Caco-2 (cell line): ENCODE measurements at regions of chr6 and their contacts with region 1.

Region 1: DNA sequence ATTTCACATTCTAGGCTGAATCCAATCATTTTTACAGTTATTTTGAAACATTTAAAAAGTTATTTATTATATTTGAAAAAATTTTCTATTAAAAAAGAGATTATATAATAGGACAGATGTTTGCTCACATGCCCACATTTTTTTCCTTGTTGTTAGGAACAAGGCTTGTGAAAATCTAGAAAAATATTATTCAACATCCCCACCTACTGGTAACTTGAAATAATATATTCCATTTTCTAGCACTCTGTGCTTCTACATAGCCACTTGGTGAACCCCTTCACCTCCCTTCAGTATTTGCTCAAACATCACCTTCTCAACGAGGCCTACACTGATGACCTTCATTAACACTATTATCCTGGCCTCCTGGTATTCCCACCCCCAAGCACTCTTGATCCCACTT is 18.3 kb upstream of the GPRC6A start:
- DNase-seq: peak in 1 of 2 experiments; percentile 16
- H3K4me3 ChIP-seq: no peak overlapping the region
- H3K4me3 Mint-ChIP-seq: no peak overlapping the region
- H3K27ac Mint-ChIP-seq: no peak overlapping the region
- H3K4me1 ChIP-seq: peaks cover 5% of the 10 kb centered on the region; the same call in 1 of the 2 replicates
- H3K4me1 Mint-ChIP-seq: no peaks in the 10 kb centered on the region
- H3K27me3 ChIP-seq: no peaks in the 10 kb centered on the region
- H3K27me3 Mint-ChIP-seq: no peaks in the 10 kb centered on the region
- CTCF ChIP-seq: peak in 1 of 2 experiments; percentile 45

Region 2: GRCh38 chr6:116779573-116780164 is 67.6 kb before region 1 on chr6:
- CTCF ChIA-PET with region 1: interaction called, 3 read pairs
- POLR2A ChIA-PET with region 1: no interaction called
- intact Hi-C with region 1: loop called (anchors 1 kb)
- DNase-seq: peak in 1 of 2 experiments; percentile 48
- H3K4me3 ChIP-seq: no peak overlapping the region
- H3K4me3 Mint-ChIP-seq: no peak overlapping the region
- H3K27ac Mint-ChIP-seq: no peak overlapping the region
- H3K4me1 ChIP-seq: no peaks in the 10 kb centered on the region
- H3K4me1 Mint-ChIP-seq: peaks cover 12% of the 10 kb centered on the region
- H3K27me3 ChIP-seq: no peaks in the 10 kb centered on the region
- H3K27me3 Mint-ChIP-seq: no peaks in the 10 kb centered on the region
- CTCF ChIP-seq: peak; percentile 23 to 65

Region 3: DNA sequence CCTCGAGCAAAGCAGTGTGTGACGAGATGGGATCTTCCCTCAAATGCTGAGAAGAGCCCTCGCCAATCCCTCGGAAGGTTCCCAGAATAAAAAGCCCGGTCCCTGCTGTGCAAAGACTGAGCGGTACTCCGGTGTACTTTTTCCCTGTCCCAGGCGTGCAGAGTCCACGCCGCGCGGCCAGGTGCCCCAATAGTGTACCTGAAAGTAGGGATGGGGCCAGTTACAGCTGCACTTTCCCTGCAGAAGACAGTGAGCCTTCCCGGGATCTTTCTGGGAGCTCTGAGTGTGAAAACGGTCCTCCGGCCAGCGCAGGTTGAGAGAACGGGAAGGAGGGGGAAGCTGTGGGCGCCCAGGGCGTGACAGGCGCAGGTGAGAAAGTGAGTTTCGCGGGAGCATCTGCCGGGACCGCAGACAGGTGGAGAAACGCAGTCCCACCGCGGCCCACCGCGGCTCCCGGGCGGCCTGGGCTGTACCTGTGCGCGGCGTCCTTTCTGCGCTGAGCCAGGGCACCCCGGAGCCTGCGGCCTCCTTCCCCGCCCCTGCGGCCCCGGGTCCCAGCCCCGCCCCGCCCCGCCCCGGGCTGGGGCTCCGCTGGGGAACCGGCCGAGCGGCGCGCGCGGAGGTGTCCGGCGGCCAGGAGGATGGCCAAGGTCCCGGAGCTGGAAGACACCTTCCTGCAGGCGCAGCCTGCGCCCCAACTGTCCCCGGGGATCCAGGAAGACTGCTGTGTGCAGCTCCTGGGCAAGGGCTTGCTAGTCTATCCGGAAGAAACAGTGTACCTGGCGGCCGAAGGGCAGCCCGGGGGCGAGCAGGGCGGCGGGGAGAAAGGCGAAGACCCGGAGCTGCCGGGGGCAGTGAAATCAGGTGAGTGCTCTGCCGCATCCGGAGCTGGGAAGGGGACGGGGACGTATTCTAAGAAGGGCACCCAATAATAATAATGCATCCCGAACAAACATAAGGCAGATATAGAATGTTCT is 29.7 kb after region 1 on chr6 and contains the start of gene RFX6:
- CTCF ChIA-PET with region 1: no interaction called
- POLR2A ChIA-PET with region 1: no interaction called
- intact Hi-C with region 1: no loop called
- DNase-seq: peak; percentile 38 to 51
- H3K4me3 ChIP-seq: peak within 1 kb of the TSS; percentile 53
- H3K4me3 Mint-ChIP-seq: peak within 1 kb of the TSS; percentile 88
- H3K27ac Mint-ChIP-seq: no peak within 1 kb of the TSS
- H3K4me1 ChIP-seq: peaks cover 4% of the 10 kb centered on the region; the same call in 1 of the 2 replicates
- H3K4me1 Mint-ChIP-seq: no peaks in the 10 kb centered on the region
- H3K27me3 ChIP-seq: peaks cover 1% of the 10 kb centered on the region
- H3K27me3 Mint-ChIP-seq: peaks cover 3% of the 10 kb centered on the region
- CTCF ChIP-seq: no peak
- total RNA-seq, gene RFX6: 1.3 and 1.5 TPM in 2 replicates